ENCODE measurements at regions of chr7 and their contacts with region 1.

Region 1: DNA sequence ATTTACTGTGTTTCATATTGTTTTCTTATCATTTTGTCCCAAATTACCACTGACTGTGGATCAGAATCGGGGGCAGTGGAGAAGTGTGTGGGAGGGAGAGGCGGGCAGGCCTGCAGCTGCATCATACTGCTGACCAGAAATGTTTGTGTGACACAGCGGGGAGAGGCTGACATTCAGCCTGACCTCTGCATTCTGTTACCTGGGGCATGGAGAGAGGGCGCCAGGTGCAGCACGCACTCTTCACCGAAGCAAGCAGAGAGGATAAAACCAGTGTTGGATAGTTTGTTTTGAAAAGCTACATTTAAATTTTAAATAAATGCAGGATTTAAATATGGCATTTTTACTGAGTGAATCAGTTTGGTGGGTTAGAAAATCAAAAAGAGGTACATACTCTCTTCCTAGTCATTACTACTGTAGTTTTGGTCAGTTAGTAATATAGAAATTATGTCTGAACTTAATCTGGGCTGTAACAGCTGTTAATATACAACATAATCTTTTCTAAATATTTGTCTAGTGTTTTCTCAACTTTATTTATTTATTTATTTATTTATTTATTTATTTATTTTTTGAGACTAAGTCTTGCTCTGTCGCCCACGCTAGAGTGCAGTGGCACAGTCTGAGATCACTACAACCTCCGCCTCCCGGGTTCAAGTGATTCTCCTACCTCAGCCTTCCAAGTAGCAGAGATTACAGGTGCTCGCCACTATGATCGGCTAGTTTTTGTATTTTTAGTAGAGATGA is 8.8 kb upstream of the STMP1 start:
- DNase-seq: no peak

Region 2: DNA sequence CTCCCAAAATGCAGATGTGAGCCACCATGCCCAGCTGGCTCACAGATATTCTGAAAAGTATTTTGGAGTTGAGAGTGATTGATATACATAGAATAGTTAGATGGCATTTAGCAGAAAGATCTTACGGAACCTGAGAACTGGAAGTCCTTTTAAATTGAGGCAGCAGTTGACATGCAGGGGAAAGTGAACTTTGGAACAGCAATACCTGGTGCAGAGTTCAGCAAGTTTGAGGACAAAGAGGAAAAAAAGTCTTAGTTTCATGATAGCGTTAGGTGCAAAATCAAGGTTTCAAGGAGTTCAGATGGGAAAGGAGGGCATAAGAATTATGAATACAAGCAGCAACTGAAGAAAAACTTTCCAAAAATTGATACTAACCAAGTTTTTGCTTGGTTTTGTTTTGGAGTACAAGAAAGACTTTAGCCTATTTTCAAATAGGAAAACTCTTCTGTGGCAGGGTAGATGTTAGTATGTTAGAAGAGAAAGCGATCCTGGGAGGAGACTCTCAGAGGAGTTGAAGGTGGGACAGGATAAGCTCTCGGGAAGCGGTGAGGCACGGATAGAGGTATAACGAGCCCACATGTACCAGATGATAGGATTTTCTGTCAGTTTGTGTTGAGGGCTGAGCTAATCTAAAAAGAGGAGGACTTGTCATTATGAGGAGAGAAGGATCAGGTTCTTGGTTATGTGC is 19.2 kb before region 1 on chr7:
- intact Hi-C with region 1: loop called in 1 of 2 experiments (anchors 2 kb)
- DNase-seq: no peak

Measured in posterior vena cava (tissue), 2 donors.